ENCODE measurements at regions of chr12 and their contacts with region 1.

Region 1: DNA sequence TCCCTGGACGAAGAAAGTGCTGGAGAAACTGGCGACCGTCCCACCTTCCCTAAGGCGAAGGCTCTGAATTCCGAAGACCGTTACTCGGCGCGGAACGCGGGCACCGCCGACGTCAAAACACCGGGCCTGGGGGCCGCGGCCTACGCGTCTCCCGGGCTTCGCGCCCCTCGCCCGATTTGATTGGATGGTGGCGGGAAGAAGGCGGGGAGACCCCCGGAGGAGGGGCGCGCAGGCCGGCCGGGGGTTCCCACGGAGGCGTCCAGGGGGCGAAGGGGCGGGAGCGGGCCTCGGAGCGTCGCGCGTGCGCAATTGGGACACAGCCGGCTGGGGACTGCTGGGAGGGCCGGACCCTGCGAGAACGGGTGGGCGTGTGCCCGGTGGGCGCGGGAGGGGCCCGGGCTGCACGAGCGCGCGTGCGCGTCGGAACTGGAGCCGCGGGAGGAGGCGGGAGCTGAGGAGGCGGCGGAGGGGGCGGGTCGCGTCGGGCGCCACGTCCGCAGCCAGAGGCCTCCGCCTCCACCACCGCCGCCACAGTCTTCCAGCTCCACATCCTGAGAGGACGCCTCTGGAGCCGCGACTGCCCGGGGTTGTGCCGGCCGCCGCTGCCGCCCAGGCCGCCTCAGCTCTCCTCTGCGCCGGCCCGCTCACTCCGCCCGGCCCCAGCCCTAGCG is at the start of gene TMEM263:
- DNase-seq: peak; percentile 97

Region 2: DNA sequence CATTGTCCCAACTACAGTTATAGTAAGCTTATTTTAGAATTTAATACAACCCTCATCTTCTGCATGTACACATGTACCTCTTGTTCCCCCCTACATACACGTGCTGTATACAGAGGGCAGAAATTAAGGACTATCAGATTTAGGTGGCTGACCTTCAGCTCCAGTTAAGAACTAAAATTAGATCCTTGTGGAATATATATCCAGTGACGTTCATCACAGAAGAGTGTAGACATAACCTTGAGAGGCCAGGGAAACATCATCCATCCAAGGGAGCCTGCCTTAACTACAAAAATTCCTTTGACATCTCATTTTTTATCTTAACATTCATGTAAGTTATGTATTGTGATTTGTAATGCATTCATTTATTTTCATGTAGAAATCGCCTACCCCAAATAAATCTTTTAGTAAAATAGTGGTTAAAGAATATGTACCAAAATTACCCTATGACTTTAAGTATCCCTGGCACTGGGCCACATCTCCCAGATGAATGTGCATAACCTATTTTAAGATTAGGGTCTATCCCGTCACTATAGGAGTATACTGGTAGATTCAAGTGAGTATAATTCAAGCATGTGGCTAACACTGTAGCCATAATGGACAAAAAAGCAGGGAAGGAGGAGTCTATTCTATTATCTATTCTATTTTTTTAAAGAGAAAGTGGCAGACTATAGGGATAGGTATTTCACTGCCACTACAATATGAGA is 153.5 kb before region 1 on chr12:
- CTCF ChIA-PET with region 1: no interaction called
- POLR2A ChIA-PET with region 1: no interaction called
- DNase-seq: no peak

Region 3: DNA sequence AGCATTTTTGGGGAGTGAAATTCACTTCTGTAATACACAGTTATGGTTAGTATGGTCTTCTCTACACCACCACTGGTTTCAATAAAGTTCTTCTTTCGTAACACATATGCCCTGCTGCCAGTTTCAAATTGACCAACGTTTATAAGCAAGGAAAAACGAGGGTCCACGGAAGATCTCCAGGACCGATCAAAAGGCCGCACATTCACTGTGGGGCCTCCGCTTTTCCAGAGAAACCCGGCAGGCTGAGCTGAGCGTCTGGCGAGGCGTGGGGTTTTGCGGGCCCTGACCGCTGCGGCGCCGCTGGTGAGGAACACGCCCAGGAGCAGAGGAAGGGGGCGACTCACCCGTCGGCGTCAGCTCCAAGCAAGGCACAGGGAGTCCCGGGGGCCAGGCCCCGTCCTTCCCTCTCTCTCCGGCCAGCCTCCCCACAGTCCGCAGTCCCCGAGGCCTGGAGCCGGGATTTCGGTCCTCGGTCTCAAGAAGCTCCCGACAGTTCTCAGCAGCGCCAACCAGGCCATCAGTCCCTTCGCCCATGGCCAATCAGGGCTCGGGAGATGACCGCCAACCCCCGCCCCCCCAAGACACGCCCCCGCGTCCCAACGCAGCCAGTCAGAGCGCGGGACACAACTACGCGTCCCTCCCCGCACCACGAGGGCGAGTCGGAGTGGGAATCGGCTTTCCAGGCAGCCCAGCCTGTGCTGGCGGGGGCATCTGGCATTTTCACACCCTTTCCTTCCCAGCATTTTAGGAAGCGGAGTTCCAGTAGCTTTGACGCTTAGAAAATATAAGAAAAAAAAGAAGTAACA is 31.3 kb after region 1 on chr12 and contains the start of gene MTERF2:
- CTCF ChIA-PET with region 1: no interaction called
- POLR2A ChIA-PET with region 1: interaction called, 16 read pairs
- DNase-seq: peak; percentile 96

Region 4: GRCh38 chr12:107093417-107094182 is 138.1 kb after region 1 on chr12 and contains the start of gene CRY1:
- CTCF ChIA-PET with region 1: no interaction called
- POLR2A ChIA-PET with region 1: interaction called, 10 read pairs
- DNase-seq: peak; percentile 93

Measured in HEK293T (cell line).